PC-3 (cell line): ENCODE measurements at regions of chr13 and their contacts with region 1.

Region 1: GRCh38 chr13:34462843-34463242 is 479.2 kb upstream of the NBEA start:
- DNase-seq: peak; percentile 92
- ATAC-seq: peak; percentile 91
- H3K4me3 ChIP-seq: no peak overlapping the region
- H3K27ac ChIP-seq: peak overlapping the region; percentile 93
- H3K4me1 ChIP-seq: peaks cover 42% of the 10 kb centered on the region
- H3K27me3 ChIP-seq: no peaks in the 10 kb centered on the region
- CTCF ChIP-seq: no peak

Region 2: GRCh38 chr13:34011541-34012085 is 451.2 kb before region 1 on chr13:
- CTCF ChIA-PET with region 1: interaction called, 13 read pairs
- POLR2A ChIA-PET with region 1: no interaction called
- intact Hi-C with region 1: no loop called
- DNase-seq: no peak
- ATAC-seq: no peak; the same call in 1 of the 2 replicates
- H3K4me3 ChIP-seq: no peak overlapping the region
- H3K27ac ChIP-seq: no peak overlapping the region
- H3K4me1 ChIP-seq: peaks cover 1% of the 10 kb centered on the region; the same call in 1 of the 2 replicates
- H3K27me3 ChIP-seq: no peaks in the 10 kb centered on the region
- CTCF ChIP-seq: no peak

Region 3: DNA sequence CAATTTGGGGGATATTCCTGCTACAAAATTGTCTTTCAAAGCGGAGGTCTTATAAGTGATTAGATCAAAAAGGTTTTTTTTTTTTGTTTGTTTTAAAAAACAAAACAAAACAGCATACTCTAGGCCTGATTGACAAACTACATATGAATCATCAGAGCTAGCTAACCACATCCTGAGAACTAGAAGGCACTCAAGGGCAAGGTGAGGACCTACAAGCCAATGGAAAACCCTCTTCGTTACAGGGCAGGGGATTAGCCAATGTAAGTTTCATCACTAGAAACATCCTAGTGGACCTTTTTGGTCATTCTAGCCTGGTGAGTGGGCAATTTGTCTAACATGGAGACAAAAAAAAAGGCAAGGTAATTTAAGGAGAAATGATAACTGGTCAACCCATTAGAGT is 216.3 kb before region 1 on chr13:
- CTCF ChIA-PET with region 1: no interaction called
- POLR2A ChIA-PET with region 1: no interaction called
- intact Hi-C with region 1: loop called (anchors 5 kb)
- DNase-seq: peak; percentile 74
- ATAC-seq: peak; percentile 95
- H3K4me3 ChIP-seq: no peak overlapping the region
- H3K27ac ChIP-seq: peak overlapping the region; percentile 60
- H3K4me1 ChIP-seq: peaks cover 25% of the 10 kb centered on the region
- H3K27me3 ChIP-seq: no peaks in the 10 kb centered on the region
- CTCF ChIP-seq: no peak

Region 4: DNA sequence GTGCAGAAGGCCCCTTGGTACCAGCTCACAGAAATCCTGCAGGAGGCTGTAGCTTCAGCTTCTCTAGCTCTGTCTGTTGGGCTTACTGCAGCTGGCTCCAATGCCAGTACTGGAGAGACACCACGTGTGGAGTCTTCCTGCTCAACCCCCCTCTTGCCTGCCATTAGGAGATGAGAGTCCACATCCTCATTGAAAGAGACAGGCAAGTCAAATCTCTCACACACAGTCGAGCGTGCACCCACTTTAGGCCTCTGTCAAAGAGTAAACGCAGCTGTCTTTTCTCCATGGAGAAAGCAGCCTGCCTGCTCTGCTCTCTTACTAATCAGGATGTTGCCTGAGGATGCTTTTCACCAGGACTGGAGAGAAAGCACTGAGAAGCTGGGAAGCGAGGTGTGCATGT is 43.8 kb before region 1 on chr13:
- CTCF ChIA-PET with region 1: no interaction called
- POLR2A ChIA-PET with region 1: no interaction called
- intact Hi-C with region 1: no loop called
- DNase-seq: no peak
- ATAC-seq: no peak
- H3K4me3 ChIP-seq: no peak overlapping the region
- H3K27ac ChIP-seq: no peak overlapping the region
- H3K4me1 ChIP-seq: peaks cover 15% of the 10 kb centered on the region
- H3K27me3 ChIP-seq: no peaks in the 10 kb centered on the region
- CTCF ChIP-seq: no peak

Region 5: DNA sequence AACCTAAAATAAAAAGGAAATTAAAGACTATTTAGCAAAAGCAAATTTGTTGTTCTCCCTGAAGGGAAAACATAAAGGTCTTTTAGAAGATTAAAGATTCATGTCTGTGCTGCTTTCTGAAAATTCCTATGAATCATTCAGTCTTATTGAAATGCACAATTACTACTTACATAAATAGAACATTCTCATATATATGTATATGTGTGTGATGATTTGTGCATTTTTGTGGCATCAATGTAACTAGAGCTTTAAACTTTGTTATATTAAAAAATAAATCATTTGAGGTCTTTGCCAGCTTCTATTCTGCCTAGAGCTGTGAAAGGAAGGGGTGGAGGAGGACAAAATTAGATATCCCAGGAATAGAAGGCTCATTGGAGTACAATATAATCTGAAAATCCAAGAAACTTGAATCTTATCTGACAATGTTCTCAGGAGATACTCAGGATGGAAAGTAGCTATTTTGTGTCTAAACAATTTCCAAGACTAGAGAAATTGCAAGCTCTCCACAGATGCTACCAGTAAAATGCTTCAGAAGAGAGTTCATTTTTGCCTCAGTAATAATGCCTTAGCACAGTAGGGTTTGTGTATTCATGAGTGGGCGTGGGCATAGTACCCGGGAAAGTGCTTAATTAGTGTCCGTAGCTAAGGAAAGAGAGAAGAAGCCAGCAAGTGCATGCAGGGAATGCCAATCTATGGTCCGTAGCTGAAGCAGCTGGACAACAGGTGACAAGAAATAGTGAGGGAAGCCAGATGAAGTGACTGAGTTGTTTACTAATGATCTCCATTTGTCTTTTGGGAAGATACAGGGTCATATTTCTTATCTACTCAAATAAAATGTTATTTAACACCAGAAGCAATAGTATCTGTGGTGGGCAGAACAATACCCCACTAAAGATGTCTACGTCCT is 83.8 kb after region 1 on chr13:
- CTCF ChIA-PET with region 1: no interaction called
- POLR2A ChIA-PET with region 1: no interaction called
- intact Hi-C with region 1: no loop called
- DNase-seq: no peak
- ATAC-seq: no peak
- H3K4me3 ChIP-seq: no peak overlapping the region
- H3K27ac ChIP-seq: no peak overlapping the region
- H3K4me1 ChIP-seq: no peaks in the 10 kb centered on the region
- H3K27me3 ChIP-seq: no peaks in the 10 kb centered on the region
- CTCF ChIP-seq: no peak